ENCODE measurements at regions of chr2 and their contacts with region 1.

Region 1: GRCh38 chr2:102235491-102235890 is 48.7 kb downstream of the IL1RL2 start:
- DNase-seq: no peak
- H3K4me3 ChIP-seq: no peak overlapping the region
- CTCF ChIP-seq: peak; percentile 38

Region 2: GRCh38 chr2:102013206-102014040 is 222.1 kb before region 1 on chr2:
- CTCF ChIA-PET with region 1: interaction called, 145 read pairs
- POLR2A ChIA-PET with region 1: no interaction called
- DNase-seq: no peak
- H3K4me3 ChIP-seq: no peak overlapping the region
- CTCF ChIP-seq: no peak

Measured in AG04449 (cell line).